ENCODE measurements at regions of chr5 and their contacts with region 1.

Region 1: DNA sequence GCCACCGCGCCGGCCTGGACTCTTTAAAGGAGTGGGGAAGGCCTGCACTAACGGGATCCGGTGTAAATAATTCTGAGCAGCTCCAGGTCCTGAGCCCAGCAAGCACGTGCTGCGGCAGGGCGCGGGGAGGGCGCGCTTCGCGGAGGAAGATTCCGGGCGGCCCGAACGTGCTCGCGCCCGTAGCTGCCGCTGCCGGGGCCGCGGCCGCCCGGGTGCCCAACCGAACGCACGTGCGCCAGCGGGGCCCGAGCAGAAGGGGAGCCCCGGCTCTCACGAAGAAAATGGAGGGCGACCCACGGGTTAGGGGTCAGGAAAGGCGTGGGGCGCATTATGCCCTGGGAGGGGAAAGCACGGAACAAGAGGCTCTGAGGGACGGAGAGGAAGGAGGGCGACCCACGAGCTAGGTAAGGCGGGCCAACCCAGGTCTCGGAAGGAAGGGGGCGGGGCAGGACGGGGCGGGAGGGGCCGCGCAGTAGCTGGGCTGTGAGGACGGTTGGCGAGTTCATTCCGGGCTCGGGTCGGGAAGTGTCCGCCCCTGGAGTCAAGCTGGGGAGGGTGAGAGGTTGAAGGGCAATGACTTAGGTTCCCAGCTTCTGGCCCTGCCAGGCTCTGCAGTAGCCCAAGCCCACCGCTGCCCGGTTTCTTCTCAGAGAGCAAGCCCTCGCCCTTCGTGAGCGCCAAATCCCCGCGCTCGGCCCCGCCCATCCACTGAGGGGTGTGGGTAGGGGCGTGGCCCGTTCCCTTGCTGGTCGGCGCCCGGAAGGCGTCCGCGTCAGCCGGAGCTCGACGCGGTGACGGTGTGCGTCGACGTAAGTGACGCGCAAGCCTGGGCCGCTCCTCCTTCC is at the start of gene ZNF131:
- DNase-seq: peak; percentile 97
- ATAC-seq: peak; percentile 93
- H3K4me3 Mint-ChIP-seq: peak within 1 kb of the TSS; percentile 89
- H3K27ac Mint-ChIP-seq: peak within 1 kb of the TSS; percentile 96
- H3K4me1 Mint-ChIP-seq: peaks cover 32% of the 10 kb centered on the region
- H3K27me3 Mint-ChIP-seq: no peaks in the 10 kb centered on the region
- CTCF ChIP-seq: no peak
- total RNA-seq, gene ZNF131: 34.8 to 36.6 TPM

Region 2: DNA sequence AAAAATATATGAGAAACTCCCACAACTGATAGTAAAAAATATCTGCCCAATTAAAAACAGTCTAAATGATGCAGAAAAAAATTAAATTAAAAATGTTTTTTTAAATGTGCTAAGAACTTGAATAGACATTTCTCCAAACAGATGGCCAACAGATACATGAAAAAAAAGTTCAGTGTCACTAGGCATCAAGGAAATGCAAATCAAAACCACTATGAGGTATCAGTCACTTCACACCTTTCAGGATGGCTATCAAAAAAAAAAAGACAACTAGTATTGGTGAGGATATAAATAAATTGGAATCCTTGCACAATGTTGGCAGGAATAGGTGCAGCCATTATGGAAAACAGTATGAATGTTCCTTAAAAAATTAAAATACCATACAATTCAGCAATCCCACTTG is 16.4 kb after region 1 on chr5:
- CTCF ChIA-PET with region 1: interaction called, 6 read pairs
- POLR2A ChIA-PET with region 1: interaction called, 20 read pairs
- intact Hi-C with region 1: no loop called
- DNase-seq: no peak
- ATAC-seq: no peak
- H3K4me3 Mint-ChIP-seq: no peak overlapping the region
- H3K27ac Mint-ChIP-seq: no peak overlapping the region
- H3K4me1 Mint-ChIP-seq: peaks cover 43% of the 10 kb centered on the region
- H3K27me3 Mint-ChIP-seq: no peaks in the 10 kb centered on the region
- CTCF ChIP-seq: no peak